Calu3 (cell line): ENCODE measurements at regions of chr17 and their contacts with region 1.

Region 1: DNA sequence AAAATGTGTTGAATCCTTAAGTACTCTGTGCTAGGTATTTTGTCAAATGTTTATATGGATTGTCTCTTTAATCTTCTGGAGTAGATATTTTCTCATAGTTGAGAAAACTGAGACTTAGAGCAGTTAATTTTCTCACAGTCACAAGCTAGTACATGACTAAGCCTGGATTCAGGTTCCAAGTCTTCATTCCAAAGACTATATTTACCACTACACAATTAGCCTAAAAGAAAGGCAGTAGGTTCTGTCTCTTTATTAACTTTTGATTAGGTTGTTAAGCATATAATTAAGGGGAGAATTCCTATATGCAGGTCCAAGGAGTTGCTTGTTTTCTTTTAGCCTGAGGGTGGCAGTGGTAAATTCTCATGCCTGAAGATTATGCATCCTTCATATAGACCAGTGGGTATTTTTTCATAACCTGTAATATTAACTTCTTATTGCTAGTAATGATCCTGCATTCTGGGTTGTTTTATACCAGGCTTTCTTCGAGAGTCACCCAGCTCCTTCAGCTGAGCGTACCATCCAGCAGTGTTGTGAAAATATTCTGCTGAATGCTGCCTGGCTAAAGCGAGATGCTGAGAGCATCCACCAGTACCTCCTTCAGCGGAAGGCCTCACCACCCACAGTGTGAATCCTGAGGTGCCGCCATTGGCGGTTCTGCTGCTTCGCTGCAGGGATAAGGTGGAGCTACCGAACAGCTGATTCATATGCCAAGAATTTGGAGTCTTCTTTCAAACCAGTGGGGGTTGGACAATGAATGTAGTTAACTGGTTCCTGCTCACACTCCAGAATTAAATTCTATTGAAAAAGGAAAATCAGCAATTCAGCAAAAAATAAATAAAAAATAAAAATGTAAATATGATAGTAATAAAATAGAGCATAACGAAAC is 28.2 kb upstream of the KPNB1 start:
- DNase-seq: peak; percentile 68
- H3K4me3 Mint-ChIP-seq: peak overlapping the region; percentile 5
- H3K27ac Mint-ChIP-seq: peak overlapping the region; percentile 52
- H3K4me1 Mint-ChIP-seq: peaks cover 44% of the 10 kb centered on the region
- H3K27me3 Mint-ChIP-seq: no peaks in the 10 kb centered on the region
- CTCF ChIP-seq: no peak

Region 2: DNA sequence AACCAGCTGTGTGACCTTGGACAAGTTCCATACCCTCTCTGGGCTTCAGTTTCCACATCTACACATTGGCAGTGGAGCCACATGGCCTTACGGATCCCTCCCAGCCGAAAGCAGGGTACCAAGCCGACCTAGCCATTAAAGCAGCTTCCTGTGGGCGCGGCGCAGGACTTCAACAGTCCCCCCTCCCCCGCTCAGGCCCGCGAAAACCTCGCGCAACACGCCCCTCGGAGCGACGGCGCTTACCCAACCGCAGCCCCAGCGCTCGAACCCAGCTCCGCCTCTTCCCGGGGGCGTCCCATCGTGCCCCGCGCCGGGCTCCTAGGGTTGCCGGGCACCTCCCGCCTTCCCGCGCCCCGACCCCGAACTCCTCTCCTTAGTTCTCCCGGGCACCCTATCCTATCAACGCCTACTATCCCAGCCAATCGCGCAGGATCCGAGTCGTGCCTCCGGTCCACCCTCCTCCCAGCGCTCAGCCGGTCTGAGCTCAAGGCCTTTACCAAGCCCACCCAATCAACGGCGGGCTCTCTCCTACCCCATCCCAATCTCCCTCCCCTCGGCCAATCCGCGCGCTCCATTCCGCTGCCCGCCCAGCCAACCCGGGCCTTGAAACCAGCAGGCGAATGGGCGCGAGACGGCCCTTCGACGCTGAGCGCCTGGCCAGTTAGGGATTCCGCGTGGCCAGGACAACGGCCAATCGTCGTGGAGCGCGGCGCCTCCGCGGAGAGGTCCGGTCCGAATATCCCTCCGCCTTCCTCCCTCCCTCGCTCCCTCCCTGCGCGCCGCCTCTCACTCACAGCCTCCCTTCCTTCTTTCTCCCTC is 27.8 kb after region 1 on chr17 and contains the start of gene KPNB1:
- CTCF ChIA-PET with region 1: interaction called, 18 read pairs
- intact Hi-C with region 1: loop called (anchors 2 kb)
- DNase-seq: peak; percentile 100
- H3K4me3 Mint-ChIP-seq: peak within 1 kb of the TSS; percentile 91
- H3K27ac Mint-ChIP-seq: peak within 1 kb of the TSS; percentile 95
- H3K4me1 Mint-ChIP-seq: peaks cover 37% of the 10 kb centered on the region
- H3K27me3 Mint-ChIP-seq: no peaks in the 10 kb centered on the region
- CTCF ChIP-seq: no peak
- total RNA-seq, gene KPNB1: 511 and 538 TPM in 2 replicates

Region 3: GRCh38 chr17:47742319-47743181 is 121.0 kb after region 1 on chr17:
- CTCF ChIA-PET with region 1: interaction called, 10 read pairs
- intact Hi-C with region 1: no loop called
- DNase-seq: peak; percentile 47
- H3K4me3 Mint-ChIP-seq: no peak overlapping the region
- H3K27ac Mint-ChIP-seq: no peak overlapping the region
- H3K4me1 Mint-ChIP-seq: no peaks in the 10 kb centered on the region
- H3K27me3 Mint-ChIP-seq: peaks cover 75% of the 10 kb centered on the region
- CTCF ChIP-seq: peak; percentile 67